ENCODE measurements at regions of chr12 and their contacts with region 1.

Region 1: DNA sequence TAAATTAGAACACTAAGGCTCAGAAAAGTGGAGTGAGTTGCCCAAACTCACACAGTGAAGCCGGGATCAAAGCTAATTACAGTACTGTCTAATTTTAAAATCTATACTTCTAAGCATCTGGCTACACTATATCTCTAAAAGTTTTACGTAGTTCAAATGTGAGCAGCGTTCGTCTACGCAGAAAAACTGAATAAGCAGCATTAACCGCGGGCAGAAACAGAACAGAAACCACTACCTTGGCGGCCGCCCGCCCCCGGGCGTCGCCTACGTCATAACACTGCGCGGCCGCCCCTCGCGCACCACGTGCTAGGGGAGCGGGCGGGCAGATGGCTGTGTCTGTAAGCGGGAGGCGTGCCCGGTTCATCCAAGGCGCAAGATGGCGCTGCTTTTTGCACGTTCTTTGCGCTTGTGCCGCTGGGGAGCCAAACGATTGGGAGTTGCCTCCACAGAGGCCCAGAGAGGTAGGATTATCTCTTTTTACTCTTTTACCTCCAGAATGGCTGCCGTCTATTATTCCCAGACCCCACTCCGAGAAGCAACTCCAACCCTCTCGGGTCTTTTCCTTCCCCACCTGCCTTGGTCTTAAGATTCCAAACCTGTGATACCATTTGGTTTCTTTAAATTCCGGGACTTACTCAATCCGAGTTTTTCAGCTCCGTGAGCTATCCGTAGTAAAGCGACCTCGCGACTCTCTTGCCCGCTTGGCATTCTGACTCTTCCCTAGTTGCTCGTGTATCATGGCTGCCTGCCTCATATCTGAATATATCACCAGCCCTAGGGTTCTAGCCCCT is at the start of gene SPRYD4:
- DNase-seq: peak; percentile 79 to 88
- H3K4me3 ChIP-seq: peak within 1 kb of the TSS; percentile 99
- H3K27ac ChIP-seq: peak within 1 kb of the TSS; percentile 74
- H3K4me1 ChIP-seq: peaks cover 7% of the 10 kb centered on the region; the same call in 1 of the 2 replicates
- H3K27me3 ChIP-seq: no peaks in the 10 kb centered on the region
- CTCF ChIP-seq: peak; percentile 41; the same call in 1 of the 2 replicates
- total RNA-seq, gene SPRYD4: 3.2 and 3.3 TPM in 2 replicates

Region 2: DNA sequence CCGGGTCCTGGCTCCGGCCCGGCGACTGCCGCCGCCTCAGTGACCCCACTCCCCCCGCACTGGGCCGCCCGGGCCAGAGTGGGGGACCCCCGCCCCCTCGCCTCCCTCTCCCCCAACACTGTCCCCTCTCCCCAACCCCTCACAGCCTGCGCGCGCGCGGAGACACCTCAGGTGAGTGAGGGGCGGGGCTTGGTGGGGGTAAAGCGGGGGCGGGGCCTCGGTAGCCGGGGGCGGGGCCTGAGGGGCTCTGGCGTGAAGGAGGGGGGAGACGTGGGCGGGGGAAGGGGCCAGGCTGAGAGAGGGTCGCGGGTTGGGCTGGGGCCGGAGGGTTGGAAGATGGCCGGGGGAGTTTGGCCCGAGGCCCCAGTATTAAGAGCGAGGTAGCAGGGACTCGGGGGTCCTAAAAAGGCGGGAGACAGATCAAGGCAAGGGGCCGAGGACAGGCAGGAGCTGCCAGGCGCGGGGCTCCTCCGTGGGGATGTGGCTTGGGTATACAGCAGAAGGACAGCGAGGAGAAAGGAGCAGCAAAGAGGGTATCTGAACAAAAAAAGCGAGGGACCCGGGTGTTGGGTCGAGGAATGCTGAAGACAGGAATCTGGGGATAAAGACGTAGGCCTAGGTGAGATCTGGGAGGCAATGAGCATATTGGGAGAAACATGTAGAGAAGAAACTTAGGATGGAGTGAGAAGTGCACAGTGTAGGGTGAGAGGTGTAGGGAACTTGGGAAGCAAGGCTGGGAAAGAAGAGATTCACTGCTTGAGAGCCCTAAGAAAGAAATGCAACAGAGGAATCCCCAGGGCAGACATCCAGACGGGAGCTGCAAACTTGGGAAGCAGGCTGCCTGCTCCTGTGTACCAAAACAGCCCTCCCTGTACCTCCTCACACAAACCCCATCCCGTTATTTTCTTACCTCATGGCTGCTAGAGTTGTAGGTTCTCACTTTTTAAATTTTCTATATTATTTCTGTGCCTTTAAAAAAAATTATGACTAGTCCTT is 460.5 kb before region 1 on chr12:
- CTCF ChIA-PET with region 1: no interaction called
- POLR2A ChIA-PET with region 1: interaction called, 12 read pairs
- intact Hi-C with region 1: no loop called
- DNase-seq: peak in 1 of 2 experiments; percentile 65
- H3K4me3 ChIP-seq: peak overlapping the region; percentile 63
- H3K27ac ChIP-seq: peak overlapping the region; percentile 52; the same call in 1 of the 2 replicates
- H3K4me1 ChIP-seq: peaks cover 13% of the 10 kb centered on the region
- H3K27me3 ChIP-seq: no peaks in the 10 kb centered on the region
- CTCF ChIP-seq: no peak

Region 3: GRCh38 chr12:56189176-56189917 is 279.1 kb before region 1 on chr12 and contains the start of gene SMARCC2:
- CTCF ChIA-PET with region 1: no interaction called
- POLR2A ChIA-PET with region 1: no interaction called
- intact Hi-C with region 1: loop called (anchors 1 kb)
- DNase-seq: peak; percentile 71 to 91
- H3K4me3 ChIP-seq: peak within 1 kb of the TSS; percentile 99
- H3K27ac ChIP-seq: peak within 1 kb of the TSS; percentile 85
- H3K4me1 ChIP-seq: peaks cover 28% of the 10 kb centered on the region
- H3K27me3 ChIP-seq: no peaks in the 10 kb centered on the region
- CTCF ChIP-seq: peak; percentile 68
- total RNA-seq, gene SMARCC2: 70.3 and 86.4 TPM in 2 replicates

Region 4: GRCh38 chr12:56266693-56267442 is 201.5 kb before region 1 on chr12 and contains the start of gene COQ10A:
- CTCF ChIA-PET with region 1: interaction called, 17 read pairs
- POLR2A ChIA-PET with region 1: interaction called, 4 read pairs
- intact Hi-C with region 1: no loop called
- DNase-seq: peak; percentile 57 to 85
- H3K4me3 ChIP-seq: peak within 1 kb of the TSS; percentile 75
- H3K27ac ChIP-seq: no peak within 1 kb of the TSS
- H3K4me1 ChIP-seq: peaks cover 15% of the 10 kb centered on the region
- H3K27me3 ChIP-seq: no peaks in the 10 kb centered on the region
- CTCF ChIP-seq: peak; percentile 73
- total RNA-seq, gene COQ10A: 6.5 and 6.9 TPM in 2 replicates

Region 5: GRCh38 chr12:56286044-56286830 is 182.2 kb before region 1 on chr12:
- CTCF ChIA-PET with region 1: no interaction called
- POLR2A ChIA-PET with region 1: interaction called, 4 read pairs
- intact Hi-C with region 1: loop called (anchors 1 kb)
- DNase-seq: no peak
- H3K4me3 ChIP-seq: no peak overlapping the region
- H3K27ac ChIP-seq: no peak overlapping the region
- H3K4me1 ChIP-seq: peaks cover 12% of the 10 kb centered on the region
- H3K27me3 ChIP-seq: no peaks in the 10 kb centered on the region
- CTCF ChIP-seq: no peak

Region 6: GRCh38 chr12:56359851-56360767 is 108.3 kb before region 1 on chr12 and contains the start of gene STAT2:
- CTCF ChIA-PET with region 1: interaction called, 4 read pairs
- POLR2A ChIA-PET with region 1: interaction called, 3 read pairs
- intact Hi-C with region 1: loop called (anchors 1 kb)
- DNase-seq: peak; percentile 99
- H3K4me3 ChIP-seq: peak within 1 kb of the TSS; percentile 79
- H3K27ac ChIP-seq: peak within 1 kb of the TSS; percentile 85
- H3K4me1 ChIP-seq: peaks cover 17% of the 10 kb centered on the region
- H3K27me3 ChIP-seq: no peaks in the 10 kb centered on the region
- CTCF ChIP-seq: no peak
- total RNA-seq, gene STAT2: 76.6 and 80.8 TPM in 2 replicates

Region 7: DNA sequence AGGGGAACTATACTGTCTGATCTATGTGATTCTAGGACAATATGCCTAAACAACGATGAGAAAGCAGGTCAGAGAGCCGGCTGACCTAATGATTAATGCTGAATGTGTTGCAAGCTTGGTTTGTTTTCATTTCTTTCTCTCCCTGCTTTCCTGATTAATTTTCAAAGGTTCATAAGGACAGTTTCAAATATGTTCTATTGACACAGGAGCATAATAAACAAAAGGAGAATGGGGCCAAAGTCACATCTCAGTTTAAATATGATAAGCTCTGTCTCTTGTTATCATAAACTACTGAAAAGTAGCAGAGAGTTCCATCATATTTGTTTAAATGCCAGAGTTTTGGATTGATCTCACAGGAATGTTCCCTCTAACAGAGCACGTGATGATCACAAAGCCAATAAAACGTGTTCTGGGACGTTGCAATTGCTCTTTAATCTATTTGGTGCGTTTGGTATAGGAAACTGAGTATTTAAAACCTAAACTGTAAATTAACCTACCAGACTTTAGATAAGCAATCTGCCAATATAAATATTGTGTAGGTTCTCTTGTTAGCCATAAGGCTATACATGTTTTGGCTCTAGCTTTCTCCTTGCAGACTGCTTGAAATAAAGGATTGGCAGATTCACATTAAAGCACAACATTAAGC is 291.0 kb after region 1 on chr12:
- CTCF ChIA-PET with region 1: no interaction called
- POLR2A ChIA-PET with region 1: no interaction called
- intact Hi-C with region 1: no loop called
- DNase-seq: no peak
- H3K4me3 ChIP-seq: no peak overlapping the region
- H3K27ac ChIP-seq: no peak overlapping the region
- H3K4me1 ChIP-seq: no peaks in the 10 kb centered on the region
- H3K27me3 ChIP-seq: no peaks in the 10 kb centered on the region
- CTCF ChIP-seq: no peak